Activated naive CD4-positive, alpha-beta T cell treated with anti-CD3 and anti-CD28 coated beads for 36 hours (primary cell): ENCODE measurements at regions of chr2 and their contacts with region 1.

Region 1: DNA sequence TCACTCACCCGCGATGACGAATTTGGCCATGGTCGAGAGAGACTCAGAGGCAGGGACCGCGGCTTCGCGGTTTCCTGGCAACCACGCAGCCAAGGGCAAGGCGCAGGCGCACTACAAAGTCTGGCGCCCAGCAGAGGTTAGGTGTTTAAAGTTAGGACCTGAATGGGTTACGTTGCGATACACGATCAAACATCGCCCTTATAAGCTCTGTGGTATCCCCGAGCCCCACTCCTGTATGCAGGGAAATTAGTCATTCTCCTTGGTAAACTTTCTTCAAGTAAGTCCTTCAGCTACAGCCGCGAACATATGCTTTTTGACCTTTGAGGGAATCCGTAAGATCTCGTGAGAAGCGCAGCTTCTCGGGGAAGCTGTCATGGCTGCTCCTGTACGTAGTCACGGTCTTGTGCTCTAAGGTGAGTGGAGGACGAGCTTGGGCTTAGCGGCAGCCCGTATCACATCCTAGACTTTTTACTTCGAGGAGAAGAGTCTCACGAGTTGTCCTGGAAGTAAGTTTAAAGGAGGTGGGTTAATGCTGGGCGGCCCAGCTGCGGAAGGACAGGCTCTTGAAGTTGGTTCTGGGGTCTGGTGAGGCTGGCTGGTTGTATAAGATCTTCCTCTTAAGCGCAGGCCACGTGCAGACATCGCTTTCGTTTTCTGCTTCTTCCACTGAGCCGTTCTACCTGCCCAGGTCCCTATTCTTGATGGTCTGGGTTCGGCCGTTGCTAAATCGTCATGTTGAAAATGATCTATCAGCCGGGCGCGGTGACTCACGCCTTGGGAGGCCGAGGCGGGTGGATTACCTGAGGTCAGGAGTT is at the starts of genes FASTKD2 and MDH1B:
- DNase-seq: peak; percentile 91
- H3K4me3 Mint-ChIP-seq: peak within 1 kb of the TSS; percentile 89
- H3K27ac Mint-ChIP-seq: peak within 1 kb of the TSS; percentile 95
- H3K4me1 Mint-ChIP-seq: peaks cover 35% of the 10 kb centered on the region
- H3K27me3 Mint-ChIP-seq: no peaks in the 10 kb centered on the region
- total RNA-seq, gene FASTKD2: 21.4 to 22.8 TPM
- total RNA-seq, gene MDH1B: 0.86 TPM

Region 2: DNA sequence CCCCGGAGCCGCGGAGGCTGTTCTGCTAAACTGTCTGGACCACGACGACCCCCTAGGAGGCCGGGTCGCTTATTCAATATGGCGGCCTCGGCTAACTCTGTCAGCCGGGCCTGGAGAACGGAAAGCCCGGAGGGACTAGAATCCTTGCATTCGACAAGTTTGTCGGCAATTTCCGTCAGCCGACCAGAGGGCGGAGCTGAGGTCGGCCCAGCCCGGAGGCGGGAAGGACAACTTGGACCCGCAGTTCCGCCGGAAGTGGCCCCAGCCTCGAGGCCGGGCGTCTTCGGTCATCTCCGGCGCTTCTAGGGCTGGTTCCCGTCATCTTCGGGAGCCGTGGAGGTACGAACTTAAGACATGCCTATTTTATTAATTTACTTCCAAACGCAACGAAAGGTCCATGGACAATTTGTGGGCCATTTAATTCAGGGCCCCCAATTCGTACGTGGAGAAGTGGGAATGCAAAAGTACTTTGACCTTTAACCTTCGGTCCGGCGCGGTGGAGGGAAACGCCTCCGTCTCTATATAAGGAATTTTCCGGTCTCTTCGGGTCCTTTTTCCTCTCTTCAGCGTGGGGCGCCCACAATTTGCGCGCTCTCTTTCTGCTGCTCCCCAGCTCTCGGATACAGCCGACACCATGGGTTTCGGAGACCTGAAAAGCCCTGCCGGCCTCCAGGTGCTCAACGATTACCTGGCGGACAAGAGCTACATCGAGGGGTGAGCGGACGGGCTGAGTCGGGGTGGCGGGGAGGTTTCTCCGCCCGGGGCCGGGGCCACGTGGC is 605.9 kb before region 1 on chr2 and contains the starts of genes EEF1B2 and NDUFS1:
- CTCF ChIA-PET with region 1: no interaction called
- intact Hi-C with region 1: loop called (anchors 1 kb)
- DNase-seq: peak; percentile 98
- H3K4me3 Mint-ChIP-seq: peak within 1 kb of the TSS; percentile 96
- H3K27ac Mint-ChIP-seq: peak within 1 kb of the TSS; percentile 97
- H3K4me1 Mint-ChIP-seq: peaks cover 50% of the 10 kb centered on the region
- H3K27me3 Mint-ChIP-seq: no peaks in the 10 kb centered on the region
- total RNA-seq, gene EEF1B2: 1,328 to 1,373 TPM
- total RNA-seq, gene NDUFS1: 81.1 to 83.3 TPM

Region 3: DNA sequence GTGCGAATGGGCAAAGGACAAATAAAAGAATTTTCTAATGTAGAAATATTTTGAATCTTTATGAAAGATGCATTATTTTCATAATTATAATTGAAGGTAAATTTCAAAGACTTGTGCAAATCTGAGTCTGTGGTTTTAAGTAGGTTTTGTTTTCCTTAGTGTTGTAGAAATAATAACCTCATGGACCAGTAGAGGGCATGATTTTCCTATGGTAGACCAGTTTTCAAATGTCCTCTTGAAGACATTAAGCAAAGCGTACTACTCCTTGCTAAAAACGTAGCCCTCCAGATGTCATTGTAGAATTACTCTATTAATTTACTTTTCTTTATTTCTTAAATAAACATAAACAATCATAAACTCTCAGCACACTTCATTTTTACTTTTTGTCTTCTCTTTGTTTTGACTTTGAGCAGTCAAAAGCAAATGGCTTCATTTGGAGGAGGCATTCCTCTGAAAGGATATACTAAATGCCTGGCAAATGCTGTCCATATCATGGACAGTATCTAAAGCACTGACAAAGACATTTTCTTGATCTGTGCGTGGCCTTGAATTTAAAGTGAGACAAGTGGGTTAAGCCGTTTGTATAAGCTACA is 209.0 kb before region 1 on chr2:
- CTCF ChIA-PET with region 1: no interaction called
- intact Hi-C with region 1: loop called (anchors 5 kb)
- DNase-seq: no peak
- H3K4me3 Mint-ChIP-seq: no peak overlapping the region
- H3K27ac Mint-ChIP-seq: no peak overlapping the region
- H3K4me1 Mint-ChIP-seq: peaks cover 13% of the 10 kb centered on the region
- H3K27me3 Mint-ChIP-seq: peaks cover 4% of the 10 kb centered on the region

Region 4: GRCh38 chr2:206800506-206801417 is 35.3 kb after region 1 on chr2:
- CTCF ChIA-PET with region 1: interaction called, 4 read pairs
- intact Hi-C with region 1: loop called (anchors 1 kb)
- DNase-seq: peak; percentile 70
- H3K4me3 Mint-ChIP-seq: no peak overlapping the region
- H3K27ac Mint-ChIP-seq: no peak overlapping the region
- H3K4me1 Mint-ChIP-seq: peaks cover 31% of the 10 kb centered on the region
- H3K27me3 Mint-ChIP-seq: no peaks in the 10 kb centered on the region

Region 5: GRCh38 chr2:207103132-207103531 is 337.7 kb after region 1 on chr2:
- CTCF ChIA-PET with region 1: no interaction called
- intact Hi-C with region 1: no loop called
- DNase-seq: no peak
- H3K4me3 Mint-ChIP-seq: no peak overlapping the region
- H3K27ac Mint-ChIP-seq: no peak overlapping the region
- H3K4me1 Mint-ChIP-seq: peaks cover 24% of the 10 kb centered on the region
- H3K27me3 Mint-ChIP-seq: no peaks in the 10 kb centered on the region

Region 6: GRCh38 chr2:207188626-207189419 is 423.4 kb after region 1 on chr2:
- CTCF ChIA-PET with region 1: no interaction called
- intact Hi-C with region 1: no loop called
- DNase-seq: no peak
- H3K4me3 Mint-ChIP-seq: no peak overlapping the region
- H3K27ac Mint-ChIP-seq: no peak overlapping the region
- H3K4me1 Mint-ChIP-seq: peaks cover 8% of the 10 kb centered on the region
- H3K27me3 Mint-ChIP-seq: no peaks in the 10 kb centered on the region

Region 7: DNA sequence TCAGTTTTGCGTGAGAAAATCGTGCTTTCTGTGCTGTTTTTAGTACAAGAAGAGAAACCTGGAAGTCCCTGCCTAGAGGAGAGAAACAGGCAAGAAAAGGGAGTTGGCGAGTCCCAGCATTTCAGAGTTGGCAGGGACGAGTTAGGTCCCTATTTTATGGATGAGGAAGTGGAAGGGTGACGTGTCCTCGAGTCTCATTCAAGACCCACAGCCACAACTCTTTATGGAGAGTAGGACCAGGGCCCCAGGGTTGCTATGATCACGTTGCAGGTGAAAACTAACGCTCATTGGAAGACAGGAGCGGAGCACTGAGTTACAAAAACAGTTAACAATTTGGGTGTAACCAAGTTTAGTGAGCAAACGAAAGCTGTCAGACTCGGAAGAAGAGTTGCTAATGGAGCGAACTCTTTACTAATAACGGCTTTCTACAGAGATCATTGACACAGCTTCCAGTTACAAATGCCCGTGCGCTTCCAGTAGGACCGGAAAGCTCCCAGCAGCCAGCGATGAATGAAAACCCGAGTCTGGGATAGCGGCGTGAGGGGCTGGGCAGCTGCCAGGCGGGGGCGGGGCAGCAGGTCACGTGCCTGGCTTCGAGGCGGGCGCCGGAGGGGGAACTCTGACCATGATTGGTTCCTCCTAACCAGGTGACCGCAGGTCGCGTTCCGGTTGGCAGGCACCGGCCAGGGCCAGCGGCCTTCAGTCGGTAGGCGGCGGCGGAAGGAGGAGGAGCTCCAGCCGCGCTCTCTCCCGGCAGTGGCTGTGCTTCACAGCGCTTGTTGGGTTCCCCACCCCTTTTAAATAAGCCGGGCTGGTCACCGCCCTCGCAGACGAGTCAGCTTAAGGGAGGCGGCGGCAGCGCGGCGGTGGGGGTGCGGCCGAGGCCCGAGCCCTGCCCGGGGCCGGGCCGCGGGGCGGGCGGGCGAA is 945.6 kb after region 1 on chr2 and contains the start of gene CCNYL1:
- CTCF ChIA-PET with region 1: no interaction called
- intact Hi-C with region 1: loop called (anchors 1 kb)
- DNase-seq: peak; percentile 98
- H3K4me3 Mint-ChIP-seq: peak within 1 kb of the TSS; percentile 88
- H3K27ac Mint-ChIP-seq: peak within 1 kb of the TSS; percentile 56
- H3K4me1 Mint-ChIP-seq: peaks cover 26% of the 10 kb centered on the region
- H3K27me3 Mint-ChIP-seq: no peaks in the 10 kb centered on the region
- total RNA-seq, gene CCNYL1: 2.5 to 2.7 TPM

Region 8: DNA sequence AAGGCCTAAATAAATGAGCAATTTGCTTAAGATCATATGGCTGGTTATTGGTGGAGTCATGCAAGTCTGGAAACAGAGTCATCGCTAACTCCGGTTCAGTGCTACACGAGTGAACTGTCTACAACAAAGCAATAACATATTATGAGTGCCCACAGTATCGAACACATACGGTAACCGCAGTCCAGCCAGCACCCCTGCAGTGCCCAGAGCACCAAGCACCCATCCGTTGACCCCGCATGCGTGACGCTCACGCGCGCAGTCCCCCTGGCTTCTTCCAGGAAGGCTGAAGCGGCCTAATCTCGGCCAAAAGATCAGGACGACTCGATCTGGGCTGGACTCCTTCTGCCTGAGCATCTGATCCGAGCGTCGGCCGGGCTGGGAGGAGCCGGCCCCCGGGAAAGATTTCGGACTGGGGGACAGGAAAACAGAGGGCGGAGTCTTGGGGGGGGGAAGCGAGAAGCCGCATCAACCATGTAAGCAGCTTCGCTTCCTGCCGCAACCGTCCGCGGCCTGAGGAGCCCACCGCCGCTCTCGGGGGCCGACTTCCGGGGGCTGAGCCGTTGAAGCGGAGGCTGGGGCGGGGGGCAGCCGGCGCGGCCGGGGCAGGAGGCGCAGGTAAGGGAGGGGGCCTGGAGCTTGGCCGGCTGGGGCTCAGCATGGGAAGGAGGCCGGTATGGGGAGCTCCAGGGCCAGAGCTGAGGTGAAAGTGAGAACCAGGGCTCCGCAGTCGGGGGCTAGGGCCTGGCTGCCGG is 1500.5 kb after region 1 on chr2 and contains the start of gene PIKFYVE:
- CTCF ChIA-PET with region 1: no interaction called
- intact Hi-C with region 1: loop called (anchors 10 kb)
- DNase-seq: peak; percentile 94
- H3K4me3 Mint-ChIP-seq: peak within 1 kb of the TSS; percentile 95
- H3K27ac Mint-ChIP-seq: peak within 1 kb of the TSS; percentile 94
- H3K4me1 Mint-ChIP-seq: peaks cover 33% of the 10 kb centered on the region
- H3K27me3 Mint-ChIP-seq: no peaks in the 10 kb centered on the region
- total RNA-seq, gene PIKFYVE: 20.2 to 22.4 TPM